Transverse colon (tissue), 4 donors: ENCODE measurements at regions of chr11 and their contacts with region 1.

Region 1: DNA sequence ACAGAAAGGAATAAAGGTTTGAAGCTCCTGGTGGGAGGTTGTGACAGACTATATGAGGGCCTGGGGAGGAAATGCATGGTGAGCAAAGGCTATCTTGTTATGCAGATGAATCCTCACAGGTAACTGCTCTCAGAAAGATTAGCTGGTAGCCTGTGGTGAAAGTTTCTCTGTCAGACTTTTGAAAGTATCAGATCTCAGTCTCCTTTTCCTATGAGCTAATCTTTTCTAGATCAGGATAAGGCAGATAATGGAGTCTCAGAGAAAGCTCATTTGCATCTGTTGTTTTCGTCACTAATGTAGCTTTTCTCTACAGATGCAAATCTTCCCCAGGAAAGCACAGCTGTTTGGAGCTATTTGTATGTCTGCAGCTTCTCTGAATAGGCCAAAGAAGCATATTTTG is 21.0 kb upstream of the OR6X1 start:
- DNase-seq: no peak
- H3K4me3 ChIP-seq: no peak overlapping the region
- H3K27ac ChIP-seq: no peak overlapping the region
- H3K4me1 ChIP-seq: no peaks in the 10 kb centered on the region
- H3K27me3 ChIP-seq: no peaks in the 10 kb centered on the region
- CTCF ChIP-seq: no peak
- EP300 ChIP-seq: no peak
- POLR2A ChIP-seq: no peak

Region 2: DNA sequence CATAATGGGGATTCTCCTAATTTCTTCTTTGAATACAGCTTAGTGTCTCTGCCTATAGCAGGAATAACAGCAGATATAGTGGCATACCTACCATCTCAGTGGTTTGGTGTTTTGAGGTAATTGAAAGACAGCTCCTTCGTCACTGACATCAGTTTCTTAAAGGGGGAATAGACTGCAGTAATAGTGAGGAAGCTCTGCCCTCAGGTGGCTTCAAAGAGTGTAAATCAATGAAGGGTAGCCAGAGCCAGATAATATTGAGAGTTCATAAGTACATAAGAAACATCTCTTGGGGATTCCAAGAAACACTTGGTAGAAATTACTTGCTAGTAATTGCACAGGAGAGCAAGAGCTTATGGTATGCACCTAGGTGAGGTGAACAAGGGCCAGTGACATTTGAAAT is 26.5 kb after region 1 on chr11:
- in situ Hi-C with region 1: no loop called
- intact Hi-C with region 1: loop called (anchors 1 kb)
- DNase-seq: no peak
- H3K4me3 ChIP-seq: no peak overlapping the region
- H3K27ac ChIP-seq: no peak overlapping the region
- H3K4me1 ChIP-seq: no peaks in the 10 kb centered on the region
- H3K27me3 ChIP-seq: no peaks in the 10 kb centered on the region
- CTCF ChIP-seq: no peak
- EP300 ChIP-seq: no peak
- POLR2A ChIP-seq: no peak